ENCODE measurements at regions of chr3 and their contacts with region 1.

Region 1: DNA sequence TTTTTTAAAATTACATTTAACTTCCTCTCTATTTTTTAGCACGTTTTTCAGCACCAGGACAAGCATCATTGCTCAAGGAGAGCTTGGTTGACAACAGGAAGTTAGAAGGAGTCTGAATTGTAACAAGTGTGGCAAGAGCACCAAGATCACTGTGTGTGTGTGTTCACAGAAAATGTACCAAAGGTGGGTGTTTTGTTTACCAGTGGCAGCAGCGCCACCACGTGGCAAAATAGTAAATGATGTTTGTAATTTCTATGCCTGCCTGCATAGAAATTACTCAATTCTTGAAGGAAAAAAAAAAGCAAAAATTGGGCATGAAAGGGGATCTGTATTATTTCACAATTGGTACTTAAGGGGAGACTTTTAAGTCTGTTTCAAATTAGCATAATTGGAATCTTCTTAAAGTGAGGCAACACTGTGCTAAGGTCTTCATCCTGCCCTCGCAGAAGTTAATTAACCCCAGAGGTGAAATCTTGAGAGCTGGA is 7.4 kb upstream of the U2SURP start:
- H3K4me3 Mint-ChIP-seq: no peak overlapping the region
- H3K27ac Mint-ChIP-seq: no peak overlapping the region
- H3K4me1 Mint-ChIP-seq: peaks cover 6% of the 10 kb centered on the region
- H3K27me3 Mint-ChIP-seq: peaks cover 2% of the 10 kb centered on the region

Region 2: DNA sequence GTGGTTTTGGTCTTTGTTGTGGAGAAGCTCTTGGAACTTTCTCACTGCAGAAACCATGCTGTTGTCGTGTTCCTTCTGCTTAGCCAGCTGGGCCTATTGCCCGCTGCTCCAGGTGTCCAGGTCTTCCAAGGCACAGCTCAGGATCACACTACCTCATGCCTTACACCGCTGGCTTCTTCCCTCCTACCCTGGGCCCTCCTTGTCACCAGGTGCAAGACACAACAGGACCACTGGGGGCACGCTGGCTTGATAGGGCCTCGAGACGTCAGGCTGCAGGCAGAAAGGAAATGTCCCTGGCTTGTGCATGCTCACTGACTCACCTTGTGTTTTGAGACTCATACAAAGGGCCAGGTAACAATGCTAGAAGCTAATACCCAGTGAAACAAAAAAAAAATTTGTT is 62.8 kb before region 1 on chr3:
- intact Hi-C with region 1: loop called (anchors 5 kb)
- H3K4me3 Mint-ChIP-seq: no peak overlapping the region
- H3K27ac Mint-ChIP-seq: no peak overlapping the region
- H3K4me1 Mint-ChIP-seq: no peaks in the 10 kb centered on the region
- H3K27me3 Mint-ChIP-seq: no peaks in the 10 kb centered on the region

Region 3: GRCh38 chr3:143010024-143010423 is 16.0 kb after region 1 on chr3:
- intact Hi-C with region 1: no loop called
- H3K4me3 Mint-ChIP-seq: no peak overlapping the region
- H3K27ac Mint-ChIP-seq: no peak overlapping the region
- H3K4me1 Mint-ChIP-seq: peaks cover 28% of the 10 kb centered on the region
- H3K27me3 Mint-ChIP-seq: no peaks in the 10 kb centered on the region